Naive thymus-derived CD4-positive, alpha-beta T cell (primary cell): ENCODE measurements at regions of chr4 and their contacts with region 1.

Region 1: GRCh38 chr4:67499799-67500198 is 45.5 kb downstream of the CENPC start:
- DNase-seq: no peak
- ATAC-seq: no peak
- H3K4me3 ChIP-seq: no peak overlapping the region
- H3K4me3 Mint-ChIP-seq: no peak overlapping the region
- H3K27ac ChIP-seq: no peak overlapping the region
- H3K27ac Mint-ChIP-seq: no peak overlapping the region
- H3K4me1 ChIP-seq: no peaks in the 10 kb centered on the region
- H3K4me1 Mint-ChIP-seq: peaks cover 0 to 19% (median 5%) of the 10 kb centered on the region in 7 donors
- H3K27me3 ChIP-seq: no peaks in the 10 kb centered on the region
- H3K27me3 Mint-ChIP-seq: no peaks in the 10 kb centered on the region

Region 2: GRCh38 chr4:67428819-67429218 is 71.0 kb before region 1 on chr4:
- CTCF ChIA-PET with region 1: no interaction called
- POLR2A ChIA-PET with region 1: no interaction called
- intact Hi-C with region 1: no loop called
- DNase-seq: no peak
- ATAC-seq: no peak
- H3K4me3 ChIP-seq: no peak overlapping the region
- H3K4me3 Mint-ChIP-seq: no peak overlapping the region
- H3K27ac ChIP-seq: no peak overlapping the region
- H3K27ac Mint-ChIP-seq: no peak overlapping the region
- H3K4me1 ChIP-seq: no peaks in the 10 kb centered on the region
- H3K4me1 Mint-ChIP-seq: no peaks in the 10 kb centered on the region
- H3K27me3 ChIP-seq: no peaks in the 10 kb centered on the region
- H3K27me3 Mint-ChIP-seq: no peaks in the 10 kb centered on the region

Region 3: DNA sequence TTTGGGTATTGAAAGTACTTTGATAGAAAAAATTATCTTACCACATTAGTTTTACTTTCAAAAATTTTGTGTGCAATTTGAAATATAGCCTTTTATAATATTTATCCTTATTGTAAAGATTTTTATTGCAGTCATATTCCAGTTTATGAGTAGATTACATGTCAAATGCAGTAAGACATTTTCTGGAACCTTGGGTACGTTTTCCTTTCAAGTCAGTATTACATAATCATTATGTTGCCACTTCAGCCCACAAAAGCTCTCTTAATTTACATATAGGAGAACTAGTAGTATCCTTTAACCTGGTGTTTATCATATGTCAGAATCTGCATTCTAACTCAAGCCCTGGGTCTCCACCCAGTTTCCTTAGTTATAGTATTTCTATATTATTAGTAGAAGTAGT is 53.0 kb before region 1 on chr4:
- CTCF ChIA-PET with region 1: no interaction called
- POLR2A ChIA-PET with region 1: no interaction called
- intact Hi-C with region 1: loop called in 1 of 2 experiments (anchors 10 kb)
- DNase-seq: no peak
- ATAC-seq: no peak
- H3K4me3 ChIP-seq: no peak overlapping the region
- H3K4me3 Mint-ChIP-seq: no peak overlapping the region
- H3K27ac ChIP-seq: no peak overlapping the region
- H3K27ac Mint-ChIP-seq: no peak overlapping the region
- H3K4me1 ChIP-seq: no peaks in the 10 kb centered on the region
- H3K4me1 Mint-ChIP-seq: peaks cover 0 to 5% (median 0%) of the 10 kb centered on the region in 7 donors
- H3K27me3 ChIP-seq: no peaks in the 10 kb centered on the region
- H3K27me3 Mint-ChIP-seq: no peaks in the 10 kb centered on the region